Activated CD8-positive, alpha-beta T cell treated with anti-CD3 and anti-CD28 coated beads for 36 hours (primary cell): ENCODE measurements at regions of chr10 and their contacts with region 1.

Region 1: DNA sequence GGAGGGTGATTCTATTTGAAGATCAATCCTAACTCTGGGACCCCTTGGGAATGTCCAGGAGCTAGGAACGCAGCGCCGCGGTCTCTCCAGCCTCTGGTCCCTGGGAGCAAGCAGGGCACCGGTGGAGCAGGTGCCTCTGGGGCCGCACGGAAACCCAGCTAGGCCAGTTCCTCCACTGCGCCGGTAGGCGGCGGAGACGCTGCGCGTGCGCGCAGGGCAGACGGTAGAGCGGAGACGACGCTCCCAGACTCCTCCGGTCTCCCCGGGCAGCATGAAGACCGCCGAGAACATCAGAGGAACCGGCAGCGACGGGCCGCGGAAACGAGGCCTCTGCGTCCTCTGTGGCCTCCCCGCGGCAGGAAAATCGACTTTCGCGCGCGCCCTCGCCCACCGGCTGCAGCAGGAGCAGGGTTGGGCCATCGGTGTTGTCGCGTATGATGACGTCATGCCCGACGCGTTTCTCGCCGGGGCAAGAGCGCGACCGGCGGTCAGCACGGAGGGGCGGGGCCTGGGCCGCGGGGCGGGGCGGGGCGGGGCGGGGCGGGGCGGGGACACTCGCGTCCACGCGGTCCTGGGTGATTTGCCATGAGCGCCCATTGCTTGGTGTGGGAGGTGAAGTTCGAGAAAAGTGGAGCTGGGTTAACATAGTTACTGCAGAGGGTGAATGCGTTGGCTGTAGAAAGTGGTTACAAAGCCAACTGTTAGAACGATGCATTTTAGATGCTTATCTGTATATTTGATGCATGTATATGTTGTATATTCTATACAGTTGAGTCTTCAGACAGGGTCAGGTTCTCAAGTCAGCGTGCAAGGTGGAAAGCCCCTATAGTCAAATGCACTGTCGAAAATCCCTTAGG is at the start of gene PSTK:
- DNase-seq: peak; percentile 92
- ATAC-seq: peak; percentile 98
- H3K4me3 Mint-ChIP-seq: peak within 1 kb of the TSS; percentile 75
- H3K27ac Mint-ChIP-seq: peak within 1 kb of the TSS; percentile 96
- H3K4me1 Mint-ChIP-seq: peaks cover 16% of the 10 kb centered on the region
- H3K27me3 Mint-ChIP-seq: no peaks in the 10 kb centered on the region
- CTCF ChIP-seq: peak; percentile 89
- total RNA-seq, gene PSTK: 4.3 to 4.8 TPM

Region 2: DNA sequence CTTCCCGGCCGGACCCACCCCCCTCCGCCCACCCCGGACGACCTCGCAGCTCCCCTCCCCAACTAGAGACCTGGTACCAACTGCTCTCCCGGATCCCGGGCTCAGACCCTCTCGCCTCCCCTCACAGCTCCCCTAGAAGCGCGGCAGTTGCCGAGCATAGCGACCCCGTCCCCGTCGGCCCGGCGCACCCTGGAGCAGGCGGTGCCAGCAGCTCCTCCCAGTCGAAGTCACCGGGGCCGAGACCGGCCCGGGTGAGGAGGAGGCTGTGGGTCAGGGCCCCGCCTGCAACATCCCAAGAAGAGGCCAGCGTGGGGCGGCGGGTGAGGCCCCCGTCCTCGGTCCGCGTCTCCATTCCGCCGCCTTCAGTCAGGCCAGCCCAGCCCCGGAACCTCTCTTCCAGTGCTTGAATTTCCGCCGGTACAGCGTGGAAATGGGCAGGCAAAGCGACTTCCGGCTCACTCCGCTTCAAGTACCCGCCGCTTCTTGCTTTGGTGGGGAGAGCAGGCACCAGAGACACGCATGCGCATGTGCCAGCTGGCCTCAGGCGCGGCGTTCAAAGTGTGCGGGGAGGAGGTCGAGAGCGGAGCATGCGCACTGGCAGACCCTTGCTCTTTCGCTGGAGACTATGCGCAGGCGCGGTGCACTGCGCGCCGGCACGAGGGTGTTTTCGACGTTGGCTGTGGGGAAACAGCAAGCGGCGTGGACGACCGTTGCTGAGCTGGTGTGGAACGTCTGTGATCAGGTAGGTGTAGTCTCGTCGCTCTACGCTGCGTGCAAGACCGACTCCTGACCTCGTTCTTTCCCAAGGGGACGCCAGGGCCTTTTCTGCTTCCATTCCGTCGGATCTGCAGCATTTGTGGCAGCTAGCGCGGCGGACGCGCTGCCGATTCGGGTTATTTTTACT is 26.4 kb before region 1 on chr10 and contains the start of gene C10orf88:
- CTCF ChIA-PET with region 1: interaction called, 10 read pairs
- POLR2A ChIA-PET with region 1: interaction called, 7 read pairs
- intact Hi-C with region 1: no loop called
- DNase-seq: peak; percentile 97
- ATAC-seq: peak; percentile 97
- H3K4me3 Mint-ChIP-seq: peak within 1 kb of the TSS; percentile 82
- H3K27ac Mint-ChIP-seq: peak within 1 kb of the TSS; percentile 77
- H3K4me1 Mint-ChIP-seq: peaks cover 24% of the 10 kb centered on the region
- H3K27me3 Mint-ChIP-seq: no peaks in the 10 kb centered on the region
- CTCF ChIP-seq: no peak
- total RNA-seq, gene C10orf88: 6.3 to 9.1 TPM

Region 3: GRCh38 chr10:122999347-122999746 is 18.9 kb after region 1 on chr10:
- CTCF ChIA-PET with region 1: interaction called, 24 read pairs
- POLR2A ChIA-PET with region 1: interaction called, 9 read pairs
- intact Hi-C with region 1: no loop called
- DNase-seq: no peak
- ATAC-seq: no peak
- H3K4me3 Mint-ChIP-seq: no peak overlapping the region
- H3K27ac Mint-ChIP-seq: no peak overlapping the region
- H3K4me1 Mint-ChIP-seq: peaks cover 40% of the 10 kb centered on the region
- H3K27me3 Mint-ChIP-seq: no peaks in the 10 kb centered on the region
- CTCF ChIP-seq: no peak

Region 4: DNA sequence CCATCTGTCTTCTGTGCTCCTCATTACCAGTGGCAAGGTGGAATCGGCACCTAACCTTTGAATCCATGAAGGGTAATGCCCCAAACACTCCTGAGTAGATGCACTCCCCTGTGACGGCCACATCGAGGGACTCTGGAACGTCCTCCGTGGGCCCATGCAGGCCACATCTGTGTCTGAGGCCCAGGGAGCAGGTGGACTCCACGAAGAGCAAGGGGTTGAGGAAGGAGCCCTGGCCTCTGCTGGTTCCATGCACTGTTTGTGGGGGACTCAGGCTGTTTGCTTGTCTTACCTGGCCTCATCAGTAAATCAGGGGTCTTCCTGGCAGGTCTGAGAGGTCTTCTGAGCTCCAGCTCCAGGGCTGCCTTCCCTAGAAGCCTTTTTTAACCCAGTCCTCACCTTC is 92.8 kb after region 1 on chr10:
- CTCF ChIA-PET with region 1: no interaction called
- POLR2A ChIA-PET with region 1: no interaction called
- intact Hi-C with region 1: no loop called
- DNase-seq: no peak
- ATAC-seq: no peak
- H3K4me3 Mint-ChIP-seq: no peak overlapping the region
- H3K27ac Mint-ChIP-seq: no peak overlapping the region
- H3K4me1 Mint-ChIP-seq: no peaks in the 10 kb centered on the region
- H3K27me3 Mint-ChIP-seq: peaks cover 14% of the 10 kb centered on the region
- CTCF ChIP-seq: no peak